Transverse colon (tissue), 4 donors: ENCODE measurements at regions of chr2 and their contacts with region 1.

Region 1: DNA sequence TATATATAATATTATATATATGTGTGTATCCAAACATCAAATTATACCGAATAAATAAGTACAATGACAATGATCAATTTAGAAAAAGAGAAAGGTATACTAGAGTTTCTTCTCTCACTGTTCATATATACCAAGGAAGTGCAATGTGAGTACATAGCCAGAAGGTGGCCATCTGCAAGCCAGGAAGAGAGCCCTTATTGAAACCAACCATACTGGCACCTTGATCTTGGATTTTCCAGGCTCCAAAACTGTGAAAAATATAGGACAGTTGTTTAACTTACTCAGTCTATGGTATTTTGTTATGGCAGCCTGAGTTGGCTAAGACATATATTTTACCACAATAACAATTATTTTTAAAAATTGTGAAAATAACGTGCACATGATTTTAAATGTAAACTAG is 1490.2 kb upstream of the SLC39A10 start:
- DNase-seq: no peak
- H3K4me3 ChIP-seq: no peak overlapping the region
- H3K27ac ChIP-seq: no peak overlapping the region
- H3K4me1 ChIP-seq: no peaks in the 10 kb centered on the region
- H3K27me3 ChIP-seq: no peaks in the 10 kb centered on the region
- CTCF ChIP-seq: peak in 4 of 5 experiments; percentile 29 to 41 (median 38)
- EP300 ChIP-seq: no peak
- POLR2A ChIP-seq: no peak

Region 2: GRCh38 chr2:195318440-195319111 is 1151.8 kb after region 1 on chr2:
- in situ Hi-C with region 1: loop called in 1 of 4 experiments (anchors 25 kb)
- intact Hi-C with region 1: no loop called
- DNase-seq: peak; percentile 35
- H3K4me3 ChIP-seq: no peak overlapping the region
- H3K27ac ChIP-seq: peak overlapping the region in 1 of 4 donors; percentile 7
- H3K4me1 ChIP-seq: peaks cover 2 to 26% (median 4%) of the 10 kb centered on the region in 4 donors
- H3K27me3 ChIP-seq: no peaks in the 10 kb centered on the region
- CTCF ChIP-seq: peak; percentile 44 to 65 (median 59)
- EP300 ChIP-seq: no peak
- POLR2A ChIP-seq: no peak